ENCODE measurements at regions of chr10 and their contacts with region 1.

Region 1: DNA sequence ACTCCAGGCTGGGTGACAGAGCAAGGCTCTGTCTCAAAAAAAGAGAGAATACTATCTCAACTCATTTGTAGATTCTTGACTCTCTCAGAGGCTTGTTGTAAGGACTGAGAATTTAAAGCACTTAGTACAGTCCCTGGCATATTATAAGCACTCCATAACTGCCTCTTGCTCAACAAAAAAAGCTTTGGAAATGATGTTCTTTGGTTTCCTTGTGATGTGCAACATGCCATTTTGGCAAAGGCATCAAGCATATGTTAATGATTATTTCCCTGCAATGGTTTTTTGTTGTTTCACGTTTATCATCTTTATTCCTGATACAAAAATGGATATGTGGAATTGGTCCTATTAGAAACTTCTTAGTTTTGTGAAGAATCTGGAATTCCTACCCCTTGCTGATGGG is 15.7 kb downstream of the NOLC1 start:
- DNase-seq: no peak
- H3K4me3 ChIP-seq: no peak overlapping the region
- H3K27ac ChIP-seq: no peak overlapping the region
- H3K4me1 ChIP-seq: peaks cover 3% of the 10 kb centered on the region
- CTCF ChIP-seq: no peak

Region 2: GRCh38 chr10:102352066-102352715 is 184.3 kb after region 1 on chr10:
- CTCF ChIA-PET with region 1: no interaction called
- POLR2A ChIA-PET with region 1: no interaction called
- intact Hi-C with region 1: loop called (anchors 5 kb)
- DNase-seq: peak; percentile 63
- H3K4me3 ChIP-seq: no peak overlapping the region
- H3K27ac ChIP-seq: no peak overlapping the region
- H3K4me1 ChIP-seq: no peaks in the 10 kb centered on the region
- CTCF ChIP-seq: peak; percentile 99

Region 3: GRCh38 chr10:102399217-102400089 is 231.6 kb after region 1 on chr10:
- CTCF ChIA-PET with region 1: interaction called, 4 read pairs
- POLR2A ChIA-PET with region 1: no interaction called
- intact Hi-C with region 1: loop called (anchors 5 kb)
- DNase-seq: peak; percentile 90
- H3K4me3 ChIP-seq: peak overlapping the region; percentile 59
- H3K27ac ChIP-seq: peak overlapping the region; percentile 25
- H3K4me1 ChIP-seq: peaks cover 21% of the 10 kb centered on the region
- CTCF ChIP-seq: peak; percentile 90

Measured in OCI-LY7 (cell line).